ENCODE measurements at regions of chr5 and their contacts with region 1.

Region 1: DNA sequence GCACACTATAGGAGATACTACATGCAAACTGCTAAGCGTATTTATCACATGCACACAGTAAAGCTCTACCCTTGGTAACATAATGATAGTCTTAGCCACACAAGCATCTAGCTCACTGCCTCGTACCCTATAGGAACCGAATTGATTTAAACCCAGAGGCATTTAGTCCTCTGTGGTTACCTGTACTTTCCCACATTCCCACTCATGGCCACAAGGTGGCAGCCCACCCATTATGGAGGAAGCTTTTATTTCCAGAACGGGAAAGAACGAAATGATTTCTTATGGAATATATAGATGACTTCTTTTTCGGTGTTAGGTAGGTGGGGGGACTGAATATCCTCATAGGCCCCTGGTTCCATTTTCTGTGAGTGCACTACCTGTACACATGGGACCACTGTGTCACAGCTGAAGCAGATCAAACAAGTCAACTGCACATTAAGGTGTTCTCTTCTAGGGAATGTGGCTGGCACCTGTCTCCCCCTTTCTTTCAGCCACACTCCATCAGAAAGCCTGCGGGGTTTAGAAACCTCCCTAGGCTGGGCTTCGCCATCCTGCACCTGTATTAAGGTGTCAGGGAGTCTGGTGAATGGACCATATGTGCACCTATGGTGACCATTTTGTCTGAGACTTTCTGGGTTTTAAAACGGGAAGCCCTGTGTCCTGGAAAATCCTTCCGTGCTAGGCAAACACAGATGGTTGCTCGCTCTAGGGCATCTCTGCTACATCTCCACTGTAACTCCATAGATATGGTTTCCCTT is 313.2 kb downstream of the SLIT3 start:
- DNase-seq: peak; percentile 56
- ATAC-seq: peak; percentile 27
- H3K4me3 Mint-ChIP-seq: no peak overlapping the region
- H3K27ac Mint-ChIP-seq: no peak overlapping the region
- H3K4me1 Mint-ChIP-seq: no peaks in the 10 kb centered on the region
- H3K27me3 Mint-ChIP-seq: peaks cover 7% of the 10 kb centered on the region

Region 2: GRCh38 chr5:168967882-168968620 is 19.7 kb before region 1 on chr5:
- CTCF ChIA-PET with region 1: no interaction called
- POLR2A ChIA-PET with region 1: no interaction called
- DNase-seq: no peak
- ATAC-seq: no peak
- H3K4me3 Mint-ChIP-seq: no peak overlapping the region
- H3K27ac Mint-ChIP-seq: no peak overlapping the region
- H3K4me1 Mint-ChIP-seq: no peaks in the 10 kb centered on the region
- H3K27me3 Mint-ChIP-seq: peaks cover 24% of the 10 kb centered on the region

Region 3: DNA sequence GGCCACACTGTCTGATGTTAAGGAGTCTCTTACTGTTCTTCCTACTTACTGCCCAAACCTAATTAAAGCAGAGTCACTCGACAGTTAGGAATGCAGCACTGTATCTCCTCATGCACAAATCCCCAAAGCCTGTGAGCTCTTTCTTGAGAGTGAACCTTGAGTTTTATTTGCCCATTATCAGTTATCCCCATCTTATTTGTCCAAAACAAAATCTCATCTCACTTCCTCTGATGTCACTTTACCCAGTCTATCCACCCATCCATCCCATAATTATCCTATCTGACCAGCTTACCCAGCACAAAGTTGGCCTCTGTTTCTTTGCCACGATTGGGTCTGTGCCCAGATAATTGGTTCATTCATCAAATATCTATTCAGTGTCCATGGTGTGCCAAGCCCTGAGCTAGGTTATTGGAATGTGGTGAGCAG is 62.4 kb after region 1 on chr5:
- CTCF ChIA-PET with region 1: no interaction called
- POLR2A ChIA-PET with region 1: no interaction called
- DNase-seq: no peak
- ATAC-seq: no peak
- H3K4me3 Mint-ChIP-seq: no peak overlapping the region
- H3K27ac Mint-ChIP-seq: no peak overlapping the region
- H3K4me1 Mint-ChIP-seq: no peaks in the 10 kb centered on the region
- H3K27me3 Mint-ChIP-seq: no peaks in the 10 kb centered on the region

Region 4: DNA sequence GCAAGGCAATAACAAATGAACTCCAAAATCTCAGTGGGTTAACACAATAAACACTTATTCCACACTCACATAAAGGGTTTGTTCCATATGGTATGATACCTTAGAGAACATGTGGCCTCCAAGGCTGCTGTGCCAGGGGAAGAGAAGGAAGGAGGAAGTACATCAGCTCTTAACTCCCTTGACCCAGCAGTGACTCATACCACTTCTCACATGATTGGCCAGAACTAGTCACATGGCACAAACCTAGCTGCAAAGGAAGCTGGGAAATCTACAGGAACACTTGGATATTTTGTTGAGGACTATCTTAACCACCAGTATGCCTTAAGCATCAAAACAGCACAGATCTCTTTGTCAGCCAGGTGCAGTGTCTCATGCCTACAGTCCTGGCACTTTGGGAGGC is 213.9 kb after region 1 on chr5:
- CTCF ChIA-PET with region 1: no interaction called
- POLR2A ChIA-PET with region 1: no interaction called
- DNase-seq: no peak
- ATAC-seq: no peak
- H3K4me3 Mint-ChIP-seq: no peak overlapping the region
- H3K27ac Mint-ChIP-seq: no peak overlapping the region
- H3K4me1 Mint-ChIP-seq: no peaks in the 10 kb centered on the region
- H3K27me3 Mint-ChIP-seq: no peaks in the 10 kb centered on the region

Region 5: GRCh38 chr5:169583424-169584204 is 595.9 kb after region 1 on chr5 and contains the start of gene SPDL1:
- CTCF ChIA-PET with region 1: interaction called, 20 read pairs
- POLR2A ChIA-PET with region 1: interaction called, 3 read pairs
- DNase-seq: peak; percentile 97
- ATAC-seq: peak; percentile 96
- H3K4me3 Mint-ChIP-seq: peak within 1 kb of the TSS; percentile 98
- H3K27ac Mint-ChIP-seq: peak within 1 kb of the TSS; percentile 97
- H3K4me1 Mint-ChIP-seq: peaks cover 36% of the 10 kb centered on the region
- H3K27me3 Mint-ChIP-seq: peaks cover 2% of the 10 kb centered on the region
- total RNA-seq, gene SPDL1: 63.6 to 64.1 TPM